ENCODE measurements at regions of chr10 and their contacts with region 1.

Region 1: DNA sequence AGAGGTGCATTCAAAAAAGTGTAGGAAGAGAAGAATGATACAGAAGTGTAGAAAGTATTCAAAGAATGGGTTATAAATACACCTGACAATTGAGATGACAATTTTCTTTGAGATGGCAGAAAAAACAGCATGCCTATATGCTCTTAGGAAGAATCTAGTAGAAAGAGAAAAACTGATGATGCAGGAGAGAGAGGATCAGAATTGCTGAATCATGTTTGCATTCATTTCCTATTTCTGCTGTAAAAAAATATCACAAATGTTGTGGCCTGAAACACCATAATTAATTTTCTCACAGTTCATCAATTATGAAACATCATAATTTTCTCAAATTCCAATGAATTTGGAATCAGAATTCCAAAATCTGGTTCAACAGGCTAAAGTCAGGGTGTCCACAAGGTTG is 9.8 kb upstream of the AKR1C1 start:
- DNase-seq: no peak
- ATAC-seq: no peak
- H3K4me3 ChIP-seq: no peak overlapping the region
- H3K27ac ChIP-seq: no peak overlapping the region
- H3K4me1 ChIP-seq: no peaks in the 10 kb centered on the region
- H3K27me3 ChIP-seq: no peaks in the 10 kb centered on the region
- CTCF ChIP-seq: no peak
- EP300 ChIP-seq: no peak
- POLR2A ChIP-seq: no peak
- RAD21 ChIP-seq: no peak

Region 2: DNA sequence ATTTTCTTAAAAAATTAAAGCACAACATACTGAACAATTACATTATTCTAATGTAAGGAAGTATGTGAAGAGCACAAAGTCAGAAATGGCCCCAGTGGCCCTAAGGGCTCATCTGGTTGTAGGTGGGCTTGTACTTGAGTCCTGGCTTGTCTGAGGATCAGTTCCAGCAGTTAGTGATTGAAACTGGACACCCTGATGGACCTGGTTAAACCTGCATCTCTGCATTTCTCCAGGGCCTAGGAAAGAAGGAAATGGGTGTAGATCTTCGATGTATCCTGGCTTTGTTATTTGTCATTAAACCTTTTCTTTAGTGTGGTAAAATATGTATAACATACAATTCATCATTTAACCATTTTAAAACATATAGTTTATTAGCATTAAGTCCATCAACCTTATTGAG is 60.0 kb after region 1 on chr10:
- CTCF ChIA-PET with region 1: no interaction called
- POLR2A ChIA-PET with region 1: no interaction called
- RAD21 ChIA-PET with region 1: no interaction called
- SMC1A ChIA-PET with region 1: no interaction called
- in situ Hi-C with region 1: loop called (anchors 5 kb)
- intact Hi-C with region 1: no loop called
- DNase-seq: no peak
- ATAC-seq: no peak
- H3K4me3 ChIP-seq: no peak overlapping the region
- H3K27ac ChIP-seq: no peak overlapping the region
- H3K4me1 ChIP-seq: no peaks in the 10 kb centered on the region
- H3K27me3 ChIP-seq: no peaks in the 10 kb centered on the region; a peak in 1 of 4 replicates
- CTCF ChIP-seq: no peak
- EP300 ChIP-seq: no peak
- POLR2A ChIP-seq: no peak
- RAD21 ChIP-seq: no peak